Activated CD4-positive, alpha-beta T cell treated with anti-CD3 and anti-CD28 coated beads, Interleukin-2, amount 10 ng/mL, durations not matched to agents 24 days and 14 days (primary cell): ENCODE measurements at regions of chr4 and their contacts with region 1.

Region 1: DNA sequence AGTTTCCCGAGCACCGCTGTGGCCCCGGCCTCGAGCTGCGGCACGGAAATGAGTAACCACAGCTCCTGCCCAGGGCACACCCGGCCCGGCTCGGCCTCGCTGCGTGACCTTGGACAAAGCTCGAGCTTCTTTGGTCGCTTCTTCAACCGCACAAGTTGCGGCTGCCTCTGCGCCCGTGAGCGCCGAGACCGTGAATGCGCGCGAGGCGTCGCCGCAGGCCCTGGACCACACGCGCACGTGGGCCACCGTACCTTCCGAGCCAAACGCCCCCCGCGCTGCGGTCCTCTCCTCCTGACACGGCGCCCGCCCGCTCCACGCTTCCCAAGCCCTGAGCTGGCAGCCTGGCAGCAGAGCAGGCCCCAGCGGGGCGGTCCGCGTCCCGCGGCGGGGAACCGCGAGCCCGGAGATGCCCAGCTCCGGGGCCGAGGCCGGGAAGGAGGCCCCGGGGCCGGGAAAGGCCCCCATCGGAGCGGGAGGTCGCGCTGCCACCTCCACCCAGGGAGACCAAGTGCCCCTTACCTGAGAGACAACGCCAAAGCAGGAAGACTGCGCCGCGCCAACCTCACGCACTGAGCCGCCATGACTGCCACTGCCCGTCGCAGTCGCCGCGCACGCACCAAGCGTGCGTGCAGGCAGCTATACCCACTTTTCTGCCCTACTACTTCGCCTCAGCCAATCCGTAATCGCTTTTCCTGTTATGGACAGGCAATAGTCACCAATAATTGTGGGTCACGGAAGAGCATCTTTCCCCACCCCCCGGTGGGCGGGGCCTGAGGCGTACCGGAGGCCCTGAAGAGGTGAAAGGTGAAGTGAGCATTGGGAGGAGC is at the start of gene GRPEL1:
- DNase-seq: peak; percentile 100
- H3K4me3 Mint-ChIP-seq: peak within 1 kb of the TSS; percentile 90
- H3K27ac Mint-ChIP-seq: peak within 1 kb of the TSS; percentile 94
- H3K4me1 Mint-ChIP-seq: peaks cover 29% of the 10 kb centered on the region
- H3K27me3 Mint-ChIP-seq: peaks cover 15% of the 10 kb centered on the region
- total RNA-seq, gene GRPEL1: 100 and 106 TPM in 2 replicates

Region 2: DNA sequence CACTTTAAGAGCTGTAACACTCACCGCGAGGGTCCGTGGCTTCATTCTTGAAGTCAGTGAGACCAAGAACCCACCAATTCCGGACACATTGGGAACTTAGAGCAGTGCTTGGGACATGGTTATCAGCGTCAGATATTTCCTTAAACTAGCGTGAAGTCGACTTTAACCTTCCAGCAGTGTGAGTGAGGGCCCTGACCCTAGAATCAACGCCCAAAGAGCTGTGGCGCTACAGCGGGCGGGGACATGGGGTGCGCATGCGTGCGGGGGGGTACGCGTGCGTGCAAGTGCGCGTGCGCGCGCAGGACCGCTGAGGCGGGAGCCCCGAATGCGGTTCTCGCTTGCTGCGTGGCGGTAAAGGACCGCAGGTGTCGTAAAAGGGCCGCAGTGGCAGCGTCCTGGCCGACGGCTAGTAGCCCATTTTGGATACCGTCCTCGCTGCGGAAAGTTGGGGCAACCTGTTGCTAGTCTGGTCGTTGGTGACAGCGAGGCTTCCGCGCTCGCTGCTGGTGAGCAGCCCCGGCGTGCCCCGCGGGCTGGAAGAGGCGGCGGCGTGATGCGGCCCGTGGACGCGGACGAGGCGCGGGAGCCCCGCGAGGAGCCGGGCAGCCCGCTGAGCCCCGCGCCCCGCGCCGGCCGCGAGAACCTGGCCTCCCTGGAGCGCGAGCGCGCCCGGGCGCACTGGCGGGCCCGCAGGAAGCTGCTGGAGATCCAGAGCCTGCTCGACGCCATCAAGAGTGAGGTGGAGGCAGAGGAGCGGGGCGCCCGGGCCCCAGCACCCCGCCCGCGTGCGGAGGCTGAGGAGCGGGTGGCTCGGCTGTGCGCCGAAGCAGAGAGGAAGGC is 393.8 kb before region 1 on chr4:
- intact Hi-C with region 1: loop called (anchors 1 kb)
- DNase-seq: peak; percentile 98
- H3K4me3 Mint-ChIP-seq: peak overlapping the region; percentile 95
- H3K27ac Mint-ChIP-seq: peak overlapping the region; percentile 100
- H3K4me1 Mint-ChIP-seq: peaks cover 46% of the 10 kb centered on the region
- H3K27me3 Mint-ChIP-seq: no peaks in the 10 kb centered on the region

Region 3: GRCh38 chr4:6783053-6783981 is 284.3 kb before region 1 on chr4:
- intact Hi-C with region 1: loop called (anchors 1 kb)
- DNase-seq: peak; percentile 96
- H3K4me3 Mint-ChIP-seq: peak overlapping the region; percentile 88
- H3K27ac Mint-ChIP-seq: peak overlapping the region; percentile 75
- H3K4me1 Mint-ChIP-seq: peaks cover 43% of the 10 kb centered on the region
- H3K27me3 Mint-ChIP-seq: no peaks in the 10 kb centered on the region

Region 4: DNA sequence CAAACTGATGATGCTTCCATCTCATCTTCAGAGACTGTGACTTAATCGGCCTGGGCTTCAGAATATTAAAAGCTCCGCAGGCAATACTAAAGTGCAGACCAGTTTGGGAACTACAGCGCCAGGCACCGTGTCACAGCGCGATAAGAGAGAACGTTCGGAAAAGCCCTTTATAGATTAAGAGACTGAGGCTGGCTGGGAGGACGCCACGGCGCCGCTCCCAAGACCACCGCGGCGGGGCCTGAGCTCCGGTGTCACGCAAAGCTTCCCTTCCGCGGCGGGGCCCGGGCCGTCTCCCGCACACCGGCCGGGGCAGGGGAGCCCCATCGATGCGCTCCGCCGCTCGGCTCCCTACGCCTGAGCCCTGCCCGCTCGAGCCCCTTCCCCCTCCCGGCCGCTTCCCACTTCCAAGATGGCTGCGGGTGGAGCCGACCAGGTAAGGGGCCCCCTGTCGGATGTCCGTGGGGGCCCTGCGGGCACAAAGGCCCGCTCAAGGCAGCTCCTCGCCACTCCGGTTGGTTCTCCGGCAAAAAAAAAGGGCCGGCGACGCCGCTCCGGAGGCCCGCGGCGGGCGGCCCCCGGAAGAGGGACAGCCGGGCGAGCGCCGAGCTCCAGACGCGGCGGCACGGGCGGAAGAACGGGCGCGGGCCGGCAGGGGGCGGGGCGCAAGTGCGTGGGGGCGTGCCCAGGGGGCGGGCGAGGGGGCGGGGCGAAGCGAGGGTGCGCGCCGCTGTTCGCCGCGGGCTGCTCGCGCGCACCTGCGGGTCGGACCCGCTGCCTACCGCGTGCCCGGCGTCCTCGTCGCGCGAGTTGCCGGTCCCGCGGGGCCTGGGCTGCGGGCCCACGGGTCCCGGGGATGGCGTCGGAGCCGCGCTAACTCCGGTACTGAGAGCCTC is 158.3 kb before region 1 on chr4 and contains the start of gene TBC1D14:
- intact Hi-C with region 1: loop called (anchors 1 kb)
- DNase-seq: peak; percentile 95
- H3K4me3 Mint-ChIP-seq: peak within 1 kb of the TSS; percentile 96
- H3K27ac Mint-ChIP-seq: peak within 1 kb of the TSS; percentile 95
- H3K4me1 Mint-ChIP-seq: peaks cover 47% of the 10 kb centered on the region
- H3K27me3 Mint-ChIP-seq: no peaks in the 10 kb centered on the region
- total RNA-seq, gene TBC1D14: 47.2 and 47.3 TPM in 2 replicates

Region 5: DNA sequence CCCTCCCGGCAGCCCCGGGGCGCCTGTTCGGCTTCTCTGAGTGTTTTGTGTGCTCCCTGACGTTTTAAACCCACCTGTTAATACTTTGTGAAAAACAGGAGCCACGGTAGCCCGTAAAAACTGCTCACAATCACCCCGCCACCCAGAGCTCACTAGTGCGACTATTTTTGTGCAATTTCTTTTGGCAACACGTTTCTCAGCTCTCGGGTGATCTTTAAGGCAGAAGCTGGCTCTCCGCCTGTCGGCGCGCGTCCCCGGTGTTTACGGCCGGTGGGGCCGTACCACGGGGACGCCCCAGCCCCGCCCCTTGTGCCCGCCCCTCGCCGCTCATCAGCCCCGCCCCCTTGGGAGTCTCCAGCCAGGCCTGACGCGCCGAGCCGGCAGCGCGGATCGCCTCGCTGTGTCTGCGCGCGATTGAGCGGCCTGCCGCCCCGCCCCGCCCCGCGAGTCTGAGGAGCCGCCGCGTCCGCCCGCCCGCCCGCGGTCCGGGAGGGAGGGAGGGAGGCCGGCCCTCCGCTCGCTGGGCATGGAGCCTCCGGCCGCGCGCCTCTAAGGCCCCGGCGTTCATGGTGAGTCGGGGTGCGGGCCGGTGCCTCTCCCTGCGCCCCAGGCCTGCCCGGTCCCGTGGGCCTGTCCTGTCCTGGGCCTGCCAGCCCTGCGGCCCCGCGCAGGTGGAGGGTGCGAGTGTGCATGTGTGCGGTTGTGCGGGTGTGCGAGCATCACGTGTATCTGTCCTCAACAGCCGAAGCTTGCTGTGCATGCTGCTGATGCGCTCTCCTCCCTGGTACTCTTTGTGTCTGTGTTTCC is 80.7 kb before region 1 on chr4:
- intact Hi-C with region 1: loop called (anchors 1 kb)
- DNase-seq: peak; percentile 98
- H3K4me3 Mint-ChIP-seq: peak overlapping the region; percentile 96
- H3K27ac Mint-ChIP-seq: peak overlapping the region; percentile 95
- H3K4me1 Mint-ChIP-seq: peaks cover 72% of the 10 kb centered on the region
- H3K27me3 Mint-ChIP-seq: no peaks in the 10 kb centered on the region

Region 6: GRCh38 chr4:7034262-7035091 is 33.2 kb before region 1 on chr4:
- intact Hi-C with region 1: no loop called
- DNase-seq: no peak
- H3K4me3 Mint-ChIP-seq: no peak overlapping the region
- H3K27ac Mint-ChIP-seq: no peak overlapping the region
- H3K4me1 Mint-ChIP-seq: no peaks in the 10 kb centered on the region
- H3K27me3 Mint-ChIP-seq: no peaks in the 10 kb centered on the region

Region 7: DNA sequence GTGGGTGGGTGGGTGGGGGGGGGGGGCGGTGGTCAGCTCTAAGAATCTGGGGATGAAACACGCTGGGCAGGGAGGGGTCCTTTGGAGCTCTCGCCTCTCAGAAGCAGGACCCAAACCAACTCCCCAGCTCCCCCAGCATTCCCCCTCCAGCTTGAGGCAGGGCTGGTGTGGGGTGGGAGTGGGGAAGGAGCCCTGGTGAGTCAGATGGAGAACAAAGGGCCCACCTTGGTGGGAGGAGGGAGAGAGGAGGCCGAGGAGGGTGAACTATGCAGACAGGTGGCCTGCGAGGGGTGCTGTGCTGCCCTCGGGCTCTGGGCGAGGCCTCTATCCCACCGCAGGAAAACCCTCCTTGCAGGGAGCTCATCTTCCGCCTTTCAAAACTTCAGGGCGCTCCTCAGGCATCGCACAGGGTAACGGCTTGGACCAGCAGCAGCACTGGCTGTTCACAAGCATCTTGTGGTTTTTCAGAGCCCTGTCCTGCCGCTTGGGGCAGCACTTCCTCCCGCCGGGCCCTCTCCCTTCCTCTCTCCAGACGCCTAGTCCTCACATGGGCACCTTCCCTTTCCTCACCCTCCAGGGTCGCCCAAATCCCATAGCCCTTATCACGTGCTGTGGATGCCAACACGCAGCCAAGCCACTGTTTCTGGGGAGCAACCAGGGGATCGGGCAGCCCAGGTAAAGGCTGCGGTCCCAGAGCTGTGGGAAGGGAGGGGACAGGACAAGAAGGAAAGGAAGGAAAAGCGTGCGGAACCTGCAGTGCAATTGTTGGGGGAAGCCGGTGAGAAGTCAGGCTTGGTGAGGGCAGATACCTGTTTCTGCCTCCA is 34.2 kb after region 1 on chr4:
- intact Hi-C with region 1: loop called (anchors 1 kb)
- DNase-seq: peak; percentile 85
- H3K4me3 Mint-ChIP-seq: peak overlapping the region; percentile 95
- H3K27ac Mint-ChIP-seq: peak overlapping the region; percentile 3
- H3K4me1 Mint-ChIP-seq: peaks cover 12% of the 10 kb centered on the region
- H3K27me3 Mint-ChIP-seq: peaks cover 22% of the 10 kb centered on the region

Region 8: GRCh38 chr4:7217453-7218321 is 150.0 kb after region 1 on chr4:
- intact Hi-C with region 1: no loop called
- DNase-seq: no peak
- H3K4me3 Mint-ChIP-seq: no peak overlapping the region
- H3K27ac Mint-ChIP-seq: no peak overlapping the region
- H3K4me1 Mint-ChIP-seq: no peaks in the 10 kb centered on the region
- H3K27me3 Mint-ChIP-seq: no peaks in the 10 kb centered on the region